GM12878 (cell line): ENCODE measurements at regions of chr6 and their contacts with region 1.

Region 1: GRCh38 chr6:26553635-26554446 is 15.7 kb downstream of the HMGN4 start:
- DNase-seq: no peak
- ATAC-seq: peak; percentile 59
- H3K4me3 ChIP-seq: peak overlapping the region; percentile 80
- H3K27ac ChIP-seq: peak overlapping the region; percentile 69
- H3K4me1 ChIP-seq: 0 out of 2 replicates have a peak, but pooled peaks cover 3% of the 10 kb centered on the region
- H3K27me3 ChIP-seq: no peaks in the 10 kb centered on the region
- CTCF ChIP-seq: no peak
- EP300 ChIP-seq: no peak; a peak in 1 of 4 replicates
- POLR2A ChIP-seq: no peak
- RAD21 ChIP-seq: no peak

Region 2: DNA sequence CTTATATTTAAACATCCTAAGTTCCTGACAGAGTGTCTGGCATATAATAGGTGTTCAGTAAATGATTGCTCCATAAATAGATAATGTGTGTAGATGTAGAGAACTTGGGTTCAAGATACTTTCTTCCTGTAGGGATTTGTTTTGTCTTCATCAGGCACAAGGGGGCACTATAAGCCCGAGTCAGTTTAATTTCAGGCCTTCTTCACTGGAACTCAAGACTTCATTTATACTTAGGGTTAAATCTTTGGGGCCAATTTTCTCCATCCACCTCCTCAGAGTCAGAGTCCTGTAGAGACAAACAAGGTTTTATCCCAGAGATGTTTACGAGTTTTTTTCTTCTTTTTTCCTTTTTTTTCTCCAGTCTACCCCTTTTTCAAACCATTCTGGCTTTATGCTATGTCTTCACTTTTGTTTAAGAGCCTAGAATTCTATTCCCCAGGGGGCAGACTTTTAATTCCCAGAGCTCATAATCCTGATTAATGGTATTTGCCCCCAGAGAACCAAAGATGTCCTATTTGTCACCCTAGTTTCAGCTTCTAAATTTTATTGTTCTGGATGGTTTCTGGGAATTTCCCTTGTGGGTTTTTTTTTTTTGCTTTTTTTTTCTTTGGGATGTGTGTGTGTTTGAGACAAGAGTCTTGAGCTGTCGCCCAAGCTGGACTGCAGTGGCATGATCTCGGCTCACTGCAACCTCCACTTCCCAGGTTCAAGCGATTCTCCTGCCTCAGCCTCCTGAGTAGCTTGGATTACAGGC is 378.2 kb before region 1 on chr6:
- CTCF ChIA-PET with region 1: no interaction called
- POLR2A ChIA-PET with region 1: no interaction called
- RAD21 ChIA-PET with region 1: no interaction called
- SMC1A ChIA-PET with region 1: no interaction called
- in situ Hi-C with region 1: no loop called
- intact Hi-C with region 1: loop called (anchors 10 kb)
- DNase-seq: no peak
- ATAC-seq: peak; percentile 28
- H3K4me3 ChIP-seq: peak overlapping the region; percentile 9; the same call in 1 of the 2 replicates
- H3K27ac ChIP-seq: peak overlapping the region; percentile 27
- H3K4me1 ChIP-seq: peaks cover 27% of the 10 kb centered on the region
- H3K27me3 ChIP-seq: no peaks in the 10 kb centered on the region
- CTCF ChIP-seq: peak; percentile 56 to 77 (median 64); a peak in 5 of 6 replicates
- EP300 ChIP-seq: no peak
- POLR2A ChIP-seq: no peak
- RAD21 ChIP-seq: peak; percentile 91

Region 3: DNA sequence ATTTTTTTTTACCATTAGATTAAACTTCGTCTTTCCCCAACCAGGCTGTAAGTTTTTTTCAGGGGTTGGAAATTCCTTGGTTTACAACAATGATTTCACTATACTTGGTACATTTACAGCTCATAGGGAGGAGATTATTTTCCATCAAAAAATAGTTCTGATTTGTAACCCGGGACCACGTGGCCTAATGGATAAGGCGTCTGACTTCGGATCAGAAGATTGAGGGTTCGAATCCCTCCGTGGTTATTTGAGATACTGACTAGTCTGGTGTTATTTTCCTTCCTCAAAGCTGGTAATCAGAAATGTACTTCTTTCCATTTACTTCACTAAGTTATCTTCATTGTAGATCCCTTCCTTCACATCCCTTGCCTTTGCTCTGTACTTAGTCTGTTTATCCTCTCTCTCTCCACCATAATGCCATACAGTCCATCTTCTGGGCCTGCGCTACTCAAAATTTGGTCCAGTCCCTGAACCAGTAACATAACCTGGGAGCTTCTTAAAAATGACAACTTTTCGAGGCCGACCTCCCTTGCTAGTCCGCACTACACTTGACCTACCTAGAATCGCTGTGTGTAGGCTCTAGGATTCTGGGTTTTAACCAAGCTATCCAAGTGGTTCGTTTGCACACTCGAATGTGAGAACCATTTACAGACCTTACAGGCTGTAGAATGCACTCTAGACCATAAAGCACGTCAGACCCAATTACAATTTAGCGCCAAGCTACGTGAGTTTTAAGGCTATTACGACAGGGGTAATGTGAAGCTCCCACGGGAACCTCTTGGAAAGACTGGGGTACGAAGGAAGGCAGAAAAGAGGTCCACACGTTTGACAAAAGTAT is 231.0 kb before region 1 on chr6:
- CTCF ChIA-PET with region 1: interaction called, 6 read pairs
- POLR2A ChIA-PET with region 1: no interaction called
- RAD21 ChIA-PET with region 1: interaction called, 4 read pairs
- SMC1A ChIA-PET with region 1: interaction called, 5 read pairs
- in situ Hi-C with region 1: no loop called
- intact Hi-C with region 1: loop called (anchors 1 kb)
- DNase-seq: peak; percentile 87
- ATAC-seq: peak; percentile 58
- H3K4me3 ChIP-seq: peak overlapping the region; percentile 69
- H3K27ac ChIP-seq: no peak overlapping the region
- H3K4me1 ChIP-seq: peaks cover 7% of the 10 kb centered on the region
- H3K27me3 ChIP-seq: no peaks in the 10 kb centered on the region
- CTCF ChIP-seq: no peak
- EP300 ChIP-seq: no peak; a peak in 1 of 4 replicates
- POLR2A ChIP-seq: no peak
- RAD21 ChIP-seq: no peak

Region 4: DNA sequence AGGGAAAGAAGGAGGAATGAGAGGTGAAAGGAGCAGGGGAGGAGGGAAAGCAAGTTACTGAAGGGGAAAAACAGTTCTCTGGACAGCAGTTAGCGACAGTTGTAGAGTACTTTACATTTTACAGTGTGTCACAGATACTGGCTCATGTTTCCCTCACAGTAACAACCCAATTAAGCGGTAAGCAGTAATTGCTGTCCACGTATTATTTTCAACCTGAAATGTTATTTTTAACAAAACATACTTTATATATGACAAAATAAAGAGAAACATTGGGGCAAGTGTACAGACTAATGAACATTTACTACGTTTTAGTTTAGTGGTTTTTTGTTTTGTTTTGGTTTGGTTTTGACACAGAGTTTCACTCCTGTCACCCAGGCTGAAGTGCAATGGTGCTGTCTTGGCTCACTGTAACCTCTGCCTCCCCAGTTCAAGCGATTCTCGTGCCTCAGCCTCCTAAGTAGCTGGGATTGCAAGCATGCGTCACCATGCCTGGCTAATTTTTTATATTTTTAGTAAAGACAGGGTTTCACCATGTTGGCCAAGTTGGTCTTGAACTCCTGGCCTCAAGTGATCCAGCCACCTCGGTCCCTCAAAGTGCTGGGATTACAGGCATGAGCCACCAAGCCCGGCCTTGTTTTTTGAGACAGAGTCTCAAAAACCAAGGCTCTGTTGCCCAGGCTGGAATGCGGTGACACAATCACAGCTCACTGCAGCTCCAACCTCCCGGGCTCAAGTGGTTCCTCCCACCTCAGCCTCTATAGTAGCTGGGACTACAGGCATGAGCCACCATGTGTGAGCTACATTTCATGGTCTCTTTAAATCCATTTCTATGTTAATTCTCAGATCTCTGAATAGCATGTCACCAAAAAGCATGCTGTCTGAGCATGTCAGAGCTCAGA is 211.5 kb before region 1 on chr6:
- CTCF ChIA-PET with region 1: interaction called, 7 read pairs
- POLR2A ChIA-PET with region 1: interaction called, 6 read pairs
- RAD21 ChIA-PET with region 1: interaction called, 12 read pairs
- SMC1A ChIA-PET with region 1: interaction called, 9 read pairs
- in situ Hi-C with region 1: no loop called
- intact Hi-C with region 1: no loop called
- DNase-seq: no peak
- ATAC-seq: peak; percentile 85
- H3K4me3 ChIP-seq: peak overlapping the region; percentile 23
- H3K27ac ChIP-seq: 0 out of 2 replicates have a peak overlapping the region, but pooled peaks have one; percentile 10
- H3K4me1 ChIP-seq: peaks cover 15% of the 10 kb centered on the region
- H3K27me3 ChIP-seq: no peaks in the 10 kb centered on the region; a peak in 1 of 4 replicates
- CTCF ChIP-seq: no peak
- EP300 ChIP-seq: no peak
- POLR2A ChIP-seq: no peak
- RAD21 ChIP-seq: no peak

Region 5: GRCh38 chr6:26520853-26521599 is 32.8 kb before region 1 on chr6:
- CTCF ChIA-PET with region 1: interaction called, 4 read pairs
- POLR2A ChIA-PET with region 1: interaction called, 3 read pairs
- RAD21 ChIA-PET with region 1: interaction called, 4 read pairs
- SMC1A ChIA-PET with region 1: interaction called, 3 read pairs
- in situ Hi-C with region 1: no loop called
- intact Hi-C with region 1: loop called (anchors 1 kb)
- DNase-seq: no peak
- ATAC-seq: peak; percentile 84
- H3K4me3 ChIP-seq: peak overlapping the region; percentile 57
- H3K27ac ChIP-seq: peak overlapping the region; percentile 88
- H3K4me1 ChIP-seq: peaks cover 6% of the 10 kb centered on the region
- H3K27me3 ChIP-seq: no peaks in the 10 kb centered on the region
- CTCF ChIP-seq: no peak
- EP300 ChIP-seq: peak in 1 of 2 experiments; percentile 64; a peak in 1 of 4 replicates
- POLR2A ChIP-seq: peak; percentile 77
- RAD21 ChIP-seq: no peak

Region 6: GRCh38 chr6:26537846-26538571 is 15.8 kb before region 1 on chr6 and contains the start of gene HMGN4:
- CTCF ChIA-PET with region 1: interaction called, 17 read pairs
- POLR2A ChIA-PET with region 1: interaction called, 29 read pairs
- RAD21 ChIA-PET with region 1: interaction called, 18 read pairs
- SMC1A ChIA-PET with region 1: interaction called, 28 read pairs
- in situ Hi-C with region 1: no loop called
- intact Hi-C with region 1: loop called (anchors 1 kb)
- DNase-seq: peak; percentile 96
- ATAC-seq: peak; percentile 81
- H3K4me3 ChIP-seq: peak within 1 kb of the TSS; percentile 86
- H3K27ac ChIP-seq: peak within 1 kb of the TSS; percentile 99
- H3K4me1 ChIP-seq: peaks cover 14% of the 10 kb centered on the region
- H3K27me3 ChIP-seq: no peaks in the 10 kb centered on the region
- CTCF ChIP-seq: 0 out of 6 replicates have a peak, but pooled peaks of 1 of the 3 experiments have one; percentile 8
- EP300 ChIP-seq: peak in 1 of 2 experiments; percentile 74; a peak in 1 of 4 replicates
- POLR2A ChIP-seq: peak; percentile 84
- RAD21 ChIP-seq: no peak
- polyA plus RNA-seq, gene HMGN4: 26.7 to 31.2 TPM

Region 7: DNA sequence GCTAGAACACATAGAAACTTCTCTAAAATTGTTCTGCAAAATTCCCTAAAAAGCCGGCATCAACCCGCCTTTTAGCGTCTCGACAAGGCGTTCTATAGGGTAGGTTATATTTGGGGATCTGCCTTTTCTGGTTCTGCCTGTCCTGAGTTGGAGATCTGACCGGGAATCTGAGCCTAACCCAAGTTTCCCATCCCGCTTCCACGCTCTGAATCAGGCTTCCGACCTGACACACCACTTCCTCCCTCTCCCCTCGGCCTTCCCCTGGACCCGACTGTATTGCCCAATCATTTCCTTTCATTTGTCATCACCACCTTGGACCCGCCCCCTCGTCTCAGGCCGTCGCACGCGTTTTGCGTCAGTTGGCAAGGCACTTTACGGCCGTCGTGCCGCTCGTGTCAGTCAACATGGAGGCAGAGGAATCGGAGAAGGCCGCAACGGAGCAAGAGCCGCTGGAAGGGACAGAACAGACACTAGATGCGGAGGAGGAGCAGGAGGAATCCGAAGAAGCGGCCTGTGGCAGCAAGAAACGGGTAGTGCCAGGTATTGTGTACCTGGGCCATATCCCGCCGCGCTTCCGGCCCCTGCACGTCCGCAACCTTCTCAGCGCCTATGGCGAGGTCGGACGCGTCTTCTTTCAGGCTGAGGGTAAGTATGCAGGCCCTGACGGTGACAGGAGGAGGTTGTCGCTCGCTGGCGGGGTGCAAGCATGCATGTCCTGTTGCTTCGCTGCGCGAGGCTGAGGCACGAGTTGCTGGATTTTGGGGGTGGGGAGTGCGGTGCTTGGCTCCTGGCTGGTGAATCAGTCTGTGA is 42.9 kb after region 1 on chr6 and contains the start of gene ABT1:
- CTCF ChIA-PET with region 1: interaction called, 8 read pairs
- POLR2A ChIA-PET with region 1: no interaction called
- RAD21 ChIA-PET with region 1: interaction called, 3 read pairs
- SMC1A ChIA-PET with region 1: interaction called, 21 read pairs
- in situ Hi-C with region 1: no loop called
- intact Hi-C with region 1: no loop called
- DNase-seq: peak; percentile 96
- ATAC-seq: peak; percentile 88
- H3K4me3 ChIP-seq: peak within 1 kb of the TSS; percentile 93
- H3K27ac ChIP-seq: peak within 1 kb of the TSS; percentile 85
- H3K4me1 ChIP-seq: peaks cover 18% of the 10 kb centered on the region
- H3K27me3 ChIP-seq: no peaks in the 10 kb centered on the region
- CTCF ChIP-seq: no peak
- EP300 ChIP-seq: no peak
- POLR2A ChIP-seq: peak; percentile 97
- RAD21 ChIP-seq: no peak
- polyA plus RNA-seq, gene ABT1: 8.4 to 11.3 TPM